K562 (cell line): ENCODE measurements at regions of chr1 and their contacts with region 1.

Region 1: DNA sequence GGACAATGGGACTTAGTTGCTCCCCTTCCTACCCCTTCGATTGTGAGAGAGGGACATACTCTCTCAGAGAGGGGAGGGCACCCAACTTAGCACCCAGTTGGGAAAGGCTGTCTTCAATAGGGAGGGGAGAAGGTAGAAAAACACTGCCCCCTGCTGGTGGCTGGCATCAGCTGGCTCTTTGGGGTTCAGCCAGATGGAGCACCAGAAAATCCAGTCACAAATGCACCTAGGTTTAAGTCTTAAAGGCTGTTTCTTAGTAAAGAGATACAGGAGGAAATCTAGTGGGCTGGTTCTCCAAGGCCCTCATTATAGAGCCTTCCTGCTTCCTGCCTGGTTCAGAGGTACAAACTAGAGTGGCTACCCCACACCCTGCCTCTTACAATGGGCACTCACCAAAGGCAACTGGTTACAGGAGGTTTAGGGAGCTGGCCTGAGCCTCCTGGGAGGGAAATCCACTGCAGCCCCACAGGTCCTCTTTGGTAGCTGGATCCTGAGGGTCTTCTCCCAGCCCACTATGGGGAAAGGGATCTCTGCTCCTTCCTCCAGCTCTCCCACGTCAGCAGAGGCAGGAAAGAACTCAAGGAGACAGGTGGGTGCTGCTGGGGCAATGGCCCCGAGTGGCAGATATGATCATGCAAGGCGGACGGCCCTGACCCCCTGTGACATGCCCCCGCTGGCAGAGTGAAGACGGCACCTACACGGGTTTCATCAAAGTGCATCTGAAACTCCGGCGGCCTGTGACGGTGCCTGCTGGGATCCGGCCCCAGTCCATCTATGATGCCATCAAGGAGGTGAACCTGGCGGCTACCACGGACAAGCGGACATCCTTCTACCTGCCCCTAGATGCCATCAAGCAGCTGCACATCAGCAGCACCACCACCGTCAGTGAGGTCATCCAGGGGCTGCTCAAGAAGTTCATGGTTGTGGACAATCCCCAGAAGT is 28.3 kb downstream of the EIF2D start:
- DNase-seq: peak; percentile 89 to 91 (median 90)
- ATAC-seq: peak; percentile 95
- H3K4me3 ChIP-seq: no peak overlapping the region
- H3K27ac ChIP-seq: no peak overlapping the region
- H3K4me1 ChIP-seq: peaks cover 9 to 23% of the 10 kb centered on the region in 2 experiments
- H3K27me3 ChIP-seq: no peaks in the 10 kb centered on the region
- CTCF ChIP-seq: peak; percentile 93 to 98 (median 98)
- EP300 ChIP-seq: no peak
- POLR2A ChIP-seq: no peak
- RAD21 ChIP-seq: peak; percentile 98 to 99

Region 2: GRCh38 chr1:206479183-206480125 is 104.5 kb before region 1 on chr1:
- CTCF ChIA-PET with region 1: interaction called, 19 read pairs
- POLR2A ChIA-PET with region 1: no interaction called
- in situ Hi-C with region 1: no loop called
- intact Hi-C with region 1: no loop called
- DNase-seq: peak; percentile 85 to 88 (median 86)
- ATAC-seq: peak; percentile 82
- H3K4me3 ChIP-seq: no peak overlapping the region
- H3K27ac ChIP-seq: no peak overlapping the region
- H3K4me1 ChIP-seq: peaks cover 0 to 4% of the 10 kb centered on the region in 2 experiments; a peak in 3 of 5 replicates
- H3K27me3 ChIP-seq: peaks cover 18 to 32% of the 10 kb centered on the region in 2 experiments; a peak in 4 of 5 replicates
- CTCF ChIP-seq: peak; percentile 86 to 95 (median 91)
- EP300 ChIP-seq: no peak
- POLR2A ChIP-seq: no peak
- RAD21 ChIP-seq: peak; percentile 80 to 86

Region 3: DNA sequence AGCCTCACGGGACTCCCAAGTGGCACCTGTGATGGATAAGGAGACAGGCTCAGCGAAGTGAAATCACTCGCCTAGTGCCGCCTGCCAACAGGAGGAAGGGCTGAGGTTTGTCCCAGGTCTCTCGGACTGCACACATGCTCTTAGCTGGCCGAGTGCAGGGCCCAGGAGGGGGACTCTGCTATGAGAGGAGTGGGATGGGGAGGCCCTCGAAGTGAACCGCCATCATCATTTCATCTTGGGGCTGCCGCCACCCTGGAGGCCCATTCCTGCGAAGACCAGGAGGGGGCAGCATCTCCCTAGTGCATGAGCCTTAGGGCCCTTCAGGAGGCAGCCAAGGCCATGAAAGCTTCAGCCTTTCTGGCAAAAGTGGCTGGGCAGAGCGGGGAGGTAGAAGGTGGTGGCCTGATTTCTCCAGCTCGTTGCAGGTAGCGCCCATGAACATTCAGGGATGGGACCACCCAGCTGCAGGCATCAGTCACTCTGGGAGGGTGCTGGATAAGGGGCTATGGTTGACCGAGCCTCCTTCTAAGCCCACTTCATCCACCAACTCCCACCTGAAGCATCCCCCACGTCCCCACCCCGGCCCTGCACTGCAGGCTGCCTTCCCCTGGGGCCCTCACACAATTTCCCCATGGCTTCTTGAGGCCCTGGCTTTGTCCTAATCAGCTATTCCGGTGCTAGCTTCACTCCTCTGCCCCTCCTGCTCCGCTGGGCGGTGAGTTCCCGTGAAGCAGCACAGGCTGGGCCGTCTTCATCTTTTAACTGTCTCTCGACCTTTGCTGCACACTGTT is 93.8 kb before region 1 on chr1:
- CTCF ChIA-PET with region 1: interaction called, 97 read pairs
- POLR2A ChIA-PET with region 1: interaction called, 20 read pairs
- in situ Hi-C with region 1: loop called (anchors 5 kb)
- intact Hi-C with region 1: loop called (anchors 1 kb)
- DNase-seq: peak; percentile 90 to 94 (median 92)
- ATAC-seq: peak; percentile 96
- H3K4me3 ChIP-seq: no peak overlapping the region
- H3K27ac ChIP-seq: no peak overlapping the region
- H3K4me1 ChIP-seq: peaks cover 19 to 31% of the 10 kb centered on the region in 2 experiments
- H3K27me3 ChIP-seq: no peaks in the 10 kb centered on the region
- CTCF ChIP-seq: peak; percentile 99
- EP300 ChIP-seq: no peak
- POLR2A ChIP-seq: no peak
- RAD21 ChIP-seq: peak; percentile 98 to 99

Region 4: DNA sequence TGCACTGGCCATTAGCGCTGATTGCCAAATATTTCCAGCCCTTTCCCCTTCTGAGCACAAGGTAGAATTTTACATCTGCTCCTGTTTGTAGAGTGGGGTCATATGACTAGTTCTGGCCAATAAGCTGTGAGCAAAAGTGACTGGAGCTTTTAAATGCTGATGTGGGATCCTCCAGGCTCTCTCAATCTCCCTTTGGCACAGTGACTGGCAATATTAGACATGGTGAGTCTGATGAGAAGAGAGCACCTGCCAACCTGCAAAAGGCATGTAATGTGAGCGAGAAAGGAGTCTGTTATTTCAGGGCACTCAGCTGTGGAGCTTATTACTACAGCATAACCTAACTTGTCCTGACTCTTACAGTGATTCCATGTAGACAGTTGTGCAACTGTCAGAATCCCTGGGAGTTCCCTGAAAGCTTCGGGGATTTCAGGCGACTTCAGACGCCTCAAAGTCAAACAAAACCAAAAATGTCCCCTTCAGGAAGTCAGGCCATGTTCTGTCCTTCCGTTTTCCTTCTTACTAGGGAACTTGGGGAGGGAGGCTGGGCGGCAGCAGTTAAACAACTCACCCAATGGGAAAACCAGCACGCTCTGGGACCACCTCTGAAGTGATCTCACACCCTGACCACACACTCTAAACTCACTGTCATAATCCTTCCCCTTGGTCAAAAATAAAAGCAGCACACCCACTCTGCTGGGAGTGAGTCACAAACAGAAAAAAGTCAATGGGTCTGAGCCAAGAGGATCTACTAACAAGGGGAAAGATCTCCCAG is 80.2 kb before region 1 on chr1:
- CTCF ChIA-PET with region 1: interaction called, 7 read pairs
- POLR2A ChIA-PET with region 1: no interaction called
- in situ Hi-C with region 1: no loop called
- intact Hi-C with region 1: loop called (anchors 1 kb)
- DNase-seq: peak; percentile 79 to 88 (median 80)
- ATAC-seq: peak; percentile 72
- H3K4me3 ChIP-seq: no peak overlapping the region
- H3K27ac ChIP-seq: peak overlapping the region; percentile 81
- H3K4me1 ChIP-seq: peaks cover 35 to 52% of the 10 kb centered on the region in 2 experiments
- H3K27me3 ChIP-seq: peaks cover 8 to 13% of the 10 kb centered on the region in 2 experiments; a peak in 4 of 5 replicates
- CTCF ChIP-seq: no peak
- EP300 ChIP-seq: peak; percentile 60; the same call in 1 of the 2 replicates
- POLR2A ChIP-seq: no peak
- RAD21 ChIP-seq: peak; percentile 3 to 15; a peak in 1 of 4 replicates

Region 5: GRCh38 chr1:206544562-206545257 is 39.3 kb before region 1 on chr1:
- CTCF ChIA-PET with region 1: interaction called, 35 read pairs
- POLR2A ChIA-PET with region 1: interaction called, 6 read pairs
- in situ Hi-C with region 1: loop called (anchors 5 kb)
- intact Hi-C with region 1: loop called (anchors 1 kb)
- DNase-seq: peak; percentile 88 to 94 (median 92)
- ATAC-seq: peak; percentile 98
- H3K4me3 ChIP-seq: no peak overlapping the region
- H3K27ac ChIP-seq: no peak overlapping the region
- H3K4me1 ChIP-seq: peaks cover 7% of the 10 kb centered on the region in 2 experiments; a peak in 4 of 5 replicates
- H3K27me3 ChIP-seq: no peaks in the 10 kb centered on the region
- CTCF ChIP-seq: peak; percentile 95 to 98 (median 96)
- EP300 ChIP-seq: no peak
- POLR2A ChIP-seq: no peak
- RAD21 ChIP-seq: peak; percentile 87 to 95

Region 6: DNA sequence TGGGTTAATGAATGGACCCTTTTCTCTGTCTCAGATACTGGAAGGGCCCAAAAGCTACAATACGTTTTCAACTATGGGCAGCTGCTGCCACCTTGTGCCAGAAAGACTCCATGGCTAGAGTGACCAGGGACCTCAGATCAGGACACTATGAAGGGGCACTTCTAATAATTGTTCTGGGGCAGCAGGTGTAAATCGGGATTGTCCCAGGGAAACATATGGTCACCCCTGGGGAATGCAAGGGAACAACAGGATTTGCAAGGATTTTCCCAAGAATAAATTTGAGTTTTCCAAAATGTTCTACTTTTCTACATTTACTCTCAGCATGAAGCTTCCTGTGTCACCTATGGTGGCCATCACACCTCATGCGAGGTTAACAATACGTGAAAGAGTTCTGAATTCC is 398.2 kb after region 1 on chr1:
- CTCF ChIA-PET with region 1: no interaction called
- POLR2A ChIA-PET with region 1: no interaction called
- in situ Hi-C with region 1: no loop called
- intact Hi-C with region 1: no loop called
- DNase-seq: peak; percentile 68 to 78 (median 74)
- ATAC-seq: peak; percentile 93
- H3K4me3 ChIP-seq: no peak overlapping the region
- H3K27ac ChIP-seq: no peak overlapping the region
- H3K4me1 ChIP-seq: peaks cover 0 to 23% of the 10 kb centered on the region in 2 experiments; a peak in 3 of 5 replicates
- H3K27me3 ChIP-seq: no peaks in the 10 kb centered on the region
- CTCF ChIP-seq: peak; percentile 87 to 90 (median 88)
- EP300 ChIP-seq: no peak
- POLR2A ChIP-seq: no peak
- RAD21 ChIP-seq: peak; percentile 92 to 94